ENCODE measurements at regions of chr7 and their contacts with region 1.

Region 1: DNA sequence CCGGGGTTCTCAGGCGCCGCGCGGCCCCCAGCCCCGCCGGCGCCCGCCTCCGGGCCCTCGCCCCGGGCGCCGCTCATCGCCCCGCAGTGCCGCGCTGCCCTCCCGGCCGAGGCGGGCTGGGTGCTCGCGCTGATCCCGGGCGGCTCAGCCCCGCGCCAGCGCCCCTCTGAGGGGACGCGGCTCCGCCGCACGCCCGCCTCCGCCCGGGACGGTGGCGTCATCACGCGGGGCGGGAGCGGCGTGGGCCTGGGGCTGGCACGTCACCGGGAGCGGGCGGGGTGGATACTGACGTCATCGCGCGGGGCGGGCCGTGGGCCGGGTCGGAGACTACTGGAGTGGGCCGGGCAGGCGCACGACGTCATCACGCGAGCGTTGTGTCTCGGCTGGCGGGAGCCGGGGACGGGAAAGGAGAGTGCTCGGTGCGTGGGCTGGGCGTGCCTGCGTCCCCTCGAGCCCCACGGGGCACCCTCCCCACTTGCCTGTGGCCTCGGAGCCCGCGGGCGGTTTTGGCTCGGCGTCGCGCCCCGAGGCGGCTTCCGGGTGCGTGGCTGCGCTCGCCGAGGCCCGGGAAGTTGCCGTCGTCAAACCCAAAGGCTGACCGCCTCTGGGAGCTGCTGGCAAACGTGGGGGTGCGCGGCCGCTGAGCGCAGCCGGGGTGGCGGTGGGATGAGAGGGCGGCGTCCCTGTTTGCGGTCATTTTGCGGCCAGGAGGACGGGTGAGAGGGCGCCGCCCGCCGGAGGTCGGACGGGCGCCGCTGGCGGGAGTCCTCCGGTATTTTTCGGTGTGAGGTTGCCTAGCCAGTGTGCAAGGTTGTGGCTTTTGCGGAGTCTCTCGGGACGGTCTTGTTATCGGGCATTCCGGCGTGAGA is at the start of gene ESYT2:
- H3K4me3 Mint-ChIP-seq: peak within 1 kb of the TSS; percentile 83
- H3K27ac Mint-ChIP-seq: peak within 1 kb of the TSS; percentile 98
- H3K4me1 Mint-ChIP-seq: peaks cover 23% of the 10 kb centered on the region
- H3K27me3 Mint-ChIP-seq: no peaks in the 10 kb centered on the region

Region 2: GRCh38 chr7:158704704-158705468 is 124.7 kb before region 1 on chr7 and contains the start of gene NCAPG2:
- intact Hi-C with region 1: loop called (anchors 1 kb)
- H3K4me3 Mint-ChIP-seq: peak within 1 kb of the TSS; percentile 89
- H3K27ac Mint-ChIP-seq: peak within 1 kb of the TSS; percentile 87
- H3K4me1 Mint-ChIP-seq: peaks cover 51% of the 10 kb centered on the region
- H3K27me3 Mint-ChIP-seq: no peaks in the 10 kb centered on the region

Region 3: DNA sequence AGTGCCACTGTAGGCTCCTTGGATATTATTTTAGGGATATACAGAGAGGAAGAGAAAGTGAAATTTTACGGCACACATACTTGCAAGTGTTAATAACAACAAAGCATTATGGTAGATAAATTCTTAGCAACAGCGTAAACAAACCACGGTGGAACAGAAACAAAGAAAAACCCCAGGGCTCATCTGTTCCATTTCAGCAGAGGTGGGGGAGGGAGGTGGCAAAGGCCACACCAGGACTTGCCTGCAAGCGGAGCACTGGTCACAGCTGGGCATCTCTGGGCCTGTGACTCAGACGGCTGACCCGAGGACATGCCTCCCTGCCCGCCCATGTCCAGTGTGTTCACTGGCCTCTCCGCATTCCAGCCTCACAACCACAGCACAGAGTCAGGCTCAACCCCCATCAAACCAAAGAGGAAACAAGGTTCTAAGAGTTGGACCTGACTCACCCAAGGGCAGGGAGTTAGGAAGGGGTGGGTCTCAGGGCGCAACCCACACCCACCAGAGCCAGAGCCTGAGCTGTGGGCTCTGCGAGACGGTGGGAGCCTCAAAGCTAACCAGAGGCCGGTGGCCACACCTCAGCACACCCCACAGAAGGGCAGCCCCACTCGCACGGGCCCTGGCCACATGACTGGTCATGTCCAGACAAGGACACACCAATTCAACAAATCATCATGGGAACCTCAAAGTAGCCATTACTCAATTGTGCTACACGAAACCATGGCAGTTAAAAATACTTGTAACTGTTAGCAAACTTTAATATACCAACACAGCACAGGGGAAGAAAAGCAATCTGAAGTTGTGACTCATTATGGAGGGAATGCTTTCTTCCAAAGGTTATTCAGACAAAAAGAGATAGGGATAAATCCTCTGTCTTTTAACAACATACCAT is 11.0 kb before region 1 on chr7:
- intact Hi-C with region 1: loop called (anchors 1 kb)
- H3K4me3 Mint-ChIP-seq: peak overlapping the region; percentile 74
- H3K27ac Mint-ChIP-seq: peak overlapping the region; percentile 95
- H3K4me1 Mint-ChIP-seq: peaks cover 57% of the 10 kb centered on the region
- H3K27me3 Mint-ChIP-seq: no peaks in the 10 kb centered on the region

Region 4: DNA sequence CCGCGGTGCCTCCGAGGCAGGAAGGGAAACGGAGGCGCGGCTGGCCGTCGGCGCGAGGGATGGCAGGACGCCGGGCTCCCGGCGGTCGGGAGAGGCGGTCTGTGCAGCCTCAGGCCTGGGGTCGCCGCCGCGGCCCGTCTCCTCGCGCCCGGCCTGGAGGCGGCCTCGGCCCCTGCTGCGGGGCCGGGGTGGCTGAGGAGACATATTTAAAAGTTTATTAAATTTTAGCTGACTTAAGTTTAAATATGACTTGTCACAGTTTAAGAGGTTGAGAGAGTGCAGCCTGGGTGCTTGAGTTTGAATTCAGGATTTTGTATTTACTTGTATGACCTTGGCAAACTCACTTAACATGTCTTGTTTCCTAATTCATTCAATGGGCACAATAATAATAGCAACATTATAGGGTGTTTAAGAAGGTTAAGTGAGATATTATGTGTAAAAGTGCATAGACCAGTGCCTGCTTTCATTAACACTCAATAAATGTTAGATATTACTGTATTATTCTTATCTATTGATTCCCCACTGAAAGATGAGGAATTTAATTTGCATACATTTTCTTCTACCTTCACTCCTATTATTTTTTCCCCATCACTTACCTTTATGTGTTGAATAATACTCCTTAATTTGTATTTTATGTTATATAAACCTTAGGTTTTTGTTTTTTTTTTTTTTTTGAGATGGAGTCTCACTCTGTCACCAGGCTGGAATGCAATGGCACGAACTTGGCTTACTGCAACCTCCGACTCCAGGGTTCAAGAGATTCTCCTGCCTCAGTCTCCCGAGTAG is 27.5 kb after region 1 on chr7:
- intact Hi-C with region 1: loop called (anchors 1 kb)
- H3K4me3 Mint-ChIP-seq: peak overlapping the region; percentile 98
- H3K27ac Mint-ChIP-seq: peak overlapping the region; percentile 90
- H3K4me1 Mint-ChIP-seq: peaks cover 16% of the 10 kb centered on the region
- H3K27me3 Mint-ChIP-seq: no peaks in the 10 kb centered on the region

Region 5: GRCh38 chr7:158863611-158864506 is 34.3 kb after region 1 on chr7:
- intact Hi-C with region 1: loop called (anchors 2 kb)
- H3K4me3 Mint-ChIP-seq: peak overlapping the region; percentile 86
- H3K27ac Mint-ChIP-seq: peak overlapping the region; percentile 98
- H3K4me1 Mint-ChIP-seq: peaks cover 32% of the 10 kb centered on the region
- H3K27me3 Mint-ChIP-seq: no peaks in the 10 kb centered on the region

Region 6: GRCh38 chr7:158976849-158977593 is 147.4 kb after region 1 on chr7:
- intact Hi-C with region 1: loop called (anchors 5 kb)
- H3K4me3 Mint-ChIP-seq: peak overlapping the region; percentile 85
- H3K27ac Mint-ChIP-seq: peak overlapping the region; percentile 79
- H3K4me1 Mint-ChIP-seq: peaks cover 10% of the 10 kb centered on the region
- H3K27me3 Mint-ChIP-seq: peaks cover 11% of the 10 kb centered on the region